Dendritic cell treated with granulocyte-macrophage colony-stimulating factor and Interleukin-4, amounts not matched to agents 40 ng/mL and 50 ng/mL, for 4 days (primary cell): ENCODE measurements at regions of chr15 and their contacts with region 1.

Region 1: GRCh38 chr15:49155110-49155833 is at the start of gene COPS2:
- H3K4me3 Mint-ChIP-seq: peak within 1 kb of the TSS; percentile 98
- H3K27ac Mint-ChIP-seq: peak within 1 kb of the TSS; percentile 96
- H3K4me1 Mint-ChIP-seq: peaks cover 25% of the 10 kb centered on the region
- H3K27me3 Mint-ChIP-seq: no peaks in the 10 kb centered on the region

Region 2: DNA sequence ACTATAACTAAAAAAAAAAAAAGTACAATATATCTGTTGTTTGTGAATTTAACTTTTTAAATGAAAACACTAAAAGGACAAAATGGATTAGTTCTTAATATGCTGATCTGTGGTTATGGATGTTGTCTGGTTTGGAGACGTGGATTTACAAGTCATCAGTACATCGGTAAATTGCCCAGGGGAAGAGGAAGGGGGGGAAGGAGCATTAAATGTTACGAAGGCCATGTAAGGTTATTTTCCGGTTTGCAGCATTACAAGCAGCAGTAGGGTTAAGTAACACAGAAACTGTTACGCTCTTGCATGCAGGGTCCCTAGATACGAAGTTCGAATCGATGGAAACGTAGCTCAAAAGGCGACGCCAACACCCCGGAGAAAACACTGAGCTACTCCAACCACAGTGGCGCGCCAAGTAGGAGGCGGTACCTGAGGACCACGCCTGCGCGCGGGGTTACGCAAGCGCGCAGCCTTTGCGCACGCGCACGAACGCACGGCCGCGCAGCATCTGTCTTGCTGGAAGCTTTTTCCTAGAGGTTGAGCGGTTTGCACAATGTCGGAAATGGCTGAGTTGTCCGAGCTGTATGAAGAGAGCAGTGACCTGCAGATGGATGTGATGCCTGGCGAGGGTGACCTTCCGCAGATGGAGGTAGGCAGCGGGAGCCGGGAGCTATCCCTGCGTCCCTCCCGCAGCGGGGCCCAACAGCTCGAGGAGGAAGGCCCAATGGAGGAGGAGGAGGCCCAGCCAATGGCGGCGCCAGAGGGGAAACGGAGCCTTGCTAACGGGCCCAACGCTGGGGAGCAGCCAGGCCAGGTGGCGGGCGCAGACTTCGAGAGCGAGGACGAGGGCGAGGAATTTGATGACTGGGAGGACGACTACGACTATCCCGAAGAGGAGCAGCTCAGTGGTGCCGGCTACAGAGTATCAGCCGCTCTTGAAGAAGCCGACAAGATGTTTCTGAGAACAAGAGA is 277.4 kb before region 1 on chr15 and contains the start of gene EID1:
- intact Hi-C with region 1: loop called (anchors 5 kb)
- H3K4me3 Mint-ChIP-seq: peak within 1 kb of the TSS; percentile 98
- H3K27ac Mint-ChIP-seq: peak within 1 kb of the TSS; percentile 92
- H3K4me1 Mint-ChIP-seq: peaks cover 23% of the 10 kb centered on the region
- H3K27me3 Mint-ChIP-seq: peaks cover 3% of the 10 kb centered on the region

Region 3: DNA sequence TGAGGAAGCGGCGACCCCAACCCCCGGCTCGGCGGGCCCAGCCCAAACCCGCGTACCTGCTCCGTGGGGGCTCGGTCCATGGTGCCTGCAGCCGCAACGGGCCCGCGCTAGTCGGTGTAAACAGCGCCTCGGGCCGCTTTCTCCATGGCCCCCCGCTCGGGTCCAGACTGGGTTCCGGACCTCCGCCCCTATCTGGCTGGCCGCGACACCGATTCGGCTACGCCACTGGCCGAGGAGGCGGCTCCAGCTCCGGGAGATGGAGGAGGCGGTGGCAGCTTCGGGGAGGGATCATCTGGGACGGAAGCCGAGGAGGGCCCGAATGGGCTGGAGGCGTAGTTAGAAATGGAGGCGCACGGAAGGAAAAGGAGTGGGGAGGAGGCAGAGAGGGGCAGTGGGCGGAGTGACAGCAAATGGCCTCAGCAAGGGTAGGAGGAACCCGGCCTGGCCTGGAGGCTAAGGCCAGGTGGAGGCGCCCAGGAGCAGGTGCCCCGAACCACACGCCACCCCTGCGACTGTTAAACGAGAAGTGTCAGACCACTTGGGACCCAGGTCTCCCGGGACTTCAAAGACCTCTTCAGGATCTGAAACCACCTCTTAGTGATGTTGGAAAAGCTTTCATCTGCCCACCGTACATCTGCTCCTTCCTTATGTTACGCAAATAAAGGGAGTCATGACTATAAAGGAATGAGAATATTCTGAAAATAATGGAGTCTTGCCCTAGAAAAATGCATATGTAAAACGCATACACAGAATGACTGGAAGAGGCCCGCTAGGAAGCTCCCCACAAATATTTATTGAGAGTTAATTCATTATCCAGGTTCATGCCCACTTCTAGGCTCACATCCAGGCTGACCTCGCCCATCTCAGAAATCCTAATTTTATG is 108.8 kb before region 1 on chr15 and contains the start of gene SECISBP2L:
- intact Hi-C with region 1: loop called (anchors 5 kb)
- H3K4me3 Mint-ChIP-seq: peak within 1 kb of the TSS; percentile 94
- H3K27ac Mint-ChIP-seq: peak within 1 kb of the TSS; percentile 91
- H3K4me1 Mint-ChIP-seq: peaks cover 29% of the 10 kb centered on the region
- H3K27me3 Mint-ChIP-seq: no peaks in the 10 kb centered on the region

Region 4: DNA sequence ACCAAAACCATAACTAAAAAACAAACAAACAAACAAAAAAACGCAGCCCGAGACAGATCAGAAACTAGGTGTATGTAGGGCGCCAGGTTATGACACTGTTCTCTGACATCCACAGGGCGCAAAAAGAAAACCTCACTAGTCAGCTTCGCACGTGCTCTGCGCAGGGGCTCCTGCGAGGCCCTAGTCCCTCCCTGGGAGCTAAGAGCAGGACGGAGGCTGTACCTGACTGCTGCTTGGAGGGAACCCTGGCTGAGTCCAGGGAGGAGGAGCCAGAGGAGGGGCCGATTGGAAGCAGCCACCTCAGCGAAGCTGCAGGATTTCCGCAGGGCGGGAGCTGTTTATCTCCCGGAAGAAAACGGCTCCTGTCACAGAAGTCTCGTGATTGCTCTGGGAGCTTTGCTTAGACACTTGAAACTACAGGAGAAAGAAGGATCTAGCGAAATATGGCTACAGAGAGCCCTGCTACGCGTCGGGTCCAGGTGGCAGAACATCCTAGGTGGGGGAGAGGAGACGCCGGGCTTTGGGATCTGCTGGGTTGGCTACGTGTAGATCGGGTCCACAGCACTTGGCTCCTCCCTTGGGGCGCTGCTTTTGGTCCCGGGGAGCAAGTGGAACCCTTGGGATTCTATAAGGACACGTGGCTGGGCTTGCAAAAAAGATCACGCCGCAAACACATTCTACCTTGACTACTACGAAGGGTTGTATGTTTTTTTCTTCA is 14.8 kb after region 1 on chr15 and contains the start of gene GALK2:
- intact Hi-C with region 1: loop called (anchors 1 kb)
- H3K4me3 Mint-ChIP-seq: peak within 1 kb of the TSS; percentile 84
- H3K27ac Mint-ChIP-seq: peak within 1 kb of the TSS; percentile 94
- H3K4me1 Mint-ChIP-seq: peaks cover 36% of the 10 kb centered on the region
- H3K27me3 Mint-ChIP-seq: no peaks in the 10 kb centered on the region